ENCODE measurements at regions of chr12 and their contacts with region 1.

Region 1: GRCh38 chr12:122928404-122929147 is 32.7 kb upstream of the VPS37B start:
- DNase-seq: no peak
- H3K4me3 ChIP-seq: no peak overlapping the region
- H3K27ac ChIP-seq: no peak overlapping the region
- H3K27me3 ChIP-seq: no peaks in the 10 kb centered on the region
- CTCF ChIP-seq: no peak

Region 2: DNA sequence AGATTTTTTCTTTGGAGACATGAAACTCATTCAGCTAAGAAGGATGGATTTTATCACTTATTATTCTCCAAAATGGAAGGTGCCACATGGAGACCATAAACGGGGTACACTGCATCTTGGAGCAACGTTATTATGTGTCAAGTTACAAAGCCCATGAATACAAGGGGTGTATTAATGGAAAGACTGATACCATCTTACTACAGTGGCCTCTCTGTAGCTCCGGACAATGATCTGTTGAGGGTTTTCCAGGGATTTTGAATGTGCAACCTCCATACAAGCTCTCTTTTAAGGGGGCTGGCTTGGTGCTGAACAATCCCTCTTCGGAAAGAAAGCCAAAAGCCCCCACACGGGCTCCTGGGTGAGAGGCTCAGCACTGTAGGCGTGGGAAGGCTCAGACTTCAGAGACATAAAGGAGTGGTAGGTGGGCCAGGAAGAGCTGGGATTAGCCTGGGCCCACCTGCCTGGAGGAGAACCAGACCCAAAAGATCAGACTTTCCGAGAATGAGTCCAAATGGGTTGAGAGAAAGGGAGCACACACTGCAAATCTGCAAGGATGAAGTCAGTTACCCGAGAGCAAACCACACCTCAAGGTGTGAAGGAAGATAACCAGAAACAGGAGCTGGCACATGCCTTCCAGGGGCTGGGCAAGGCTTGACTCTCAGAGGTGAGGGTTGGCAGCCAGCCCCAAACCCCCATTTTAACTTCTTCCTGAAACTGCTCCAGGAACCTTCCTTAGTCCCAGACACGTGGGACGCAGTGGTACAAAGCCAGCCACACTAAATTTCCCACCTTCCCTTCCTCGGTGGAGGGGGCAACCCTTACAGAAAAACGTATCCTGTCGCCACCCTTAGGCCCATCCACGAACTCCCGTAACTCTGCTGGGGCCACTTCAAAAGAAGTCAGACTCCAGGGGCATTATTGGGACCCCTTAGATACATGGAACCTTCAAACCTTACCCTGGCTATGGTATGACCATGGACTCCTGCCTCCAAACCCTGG is 34.1 kb before region 1 on chr12:
- CTCF ChIA-PET with region 1: interaction called, 11 read pairs
- POLR2A ChIA-PET with region 1: no interaction called
- DNase-seq: no peak
- H3K4me3 ChIP-seq: peak overlapping the region; percentile 92
- H3K27ac ChIP-seq: peak overlapping the region; percentile 13
- H3K27me3 ChIP-seq: no peaks in the 10 kb centered on the region
- CTCF ChIP-seq: no peak

Region 3: GRCh38 chr12:122917504-122918121 is 11.0 kb before region 1 on chr12:
- CTCF ChIA-PET with region 1: no interaction called
- POLR2A ChIA-PET with region 1: no interaction called
- DNase-seq: no peak
- H3K4me3 ChIP-seq: no peak overlapping the region
- H3K27ac ChIP-seq: peak overlapping the region; percentile 31
- H3K27me3 ChIP-seq: no peaks in the 10 kb centered on the region
- CTCF ChIP-seq: no peak

Measured in AG04450 (cell line).